ENCODE measurements at regions of chr11 and their contacts with region 1.

Region 1: GRCh38 chr11:13140028-13140870 is 131.1 kb downstream of the RASSF10 start:
- DNase-seq: no peak
- H3K4me3 ChIP-seq: no peak overlapping the region
- H3K27me3 ChIP-seq: no peaks in the 10 kb centered on the region
- CTCF ChIP-seq: no peak

Region 2: GRCh38 chr11:13152736-13153533 is 12.7 kb after region 1 on chr11:
- CTCF ChIA-PET with region 1: interaction called, 10 read pairs
- POLR2A ChIA-PET with region 1: no interaction called
- DNase-seq: no peak
- H3K4me3 ChIP-seq: no peak overlapping the region
- H3K27me3 ChIP-seq: no peaks in the 10 kb centered on the region
- CTCF ChIP-seq: peak; percentile 55

Region 3: DNA sequence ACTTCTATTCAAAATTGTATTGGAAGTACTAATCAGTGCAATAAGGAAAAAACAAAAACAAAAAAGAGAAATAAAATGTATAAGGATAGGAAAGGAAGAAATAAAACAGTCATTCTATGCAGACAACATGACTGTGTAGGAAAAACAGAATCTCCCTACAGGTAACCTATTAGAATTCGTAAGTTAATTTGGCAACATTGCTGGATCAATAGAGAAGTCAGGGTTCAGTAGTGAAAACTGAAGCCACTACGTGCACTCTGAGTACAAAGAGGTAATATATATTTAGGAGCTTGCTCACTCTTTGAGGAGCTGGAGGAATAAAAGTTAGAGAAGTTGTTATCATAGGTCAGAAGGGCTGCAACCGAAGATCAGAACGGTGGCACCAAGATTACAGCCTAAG is 53.4 kb after region 1 on chr11:
- CTCF ChIA-PET with region 1: interaction called, 3 read pairs
- POLR2A ChIA-PET with region 1: interaction called, 11 read pairs
- DNase-seq: no peak
- H3K4me3 ChIP-seq: no peak overlapping the region
- H3K27me3 ChIP-seq: no peaks in the 10 kb centered on the region; the same call in 1 of the 2 replicates
- CTCF ChIP-seq: no peak

Measured in BJ (cell line).